ENCODE measurements at regions of chr20 and their contacts with region 1.

Region 1: DNA sequence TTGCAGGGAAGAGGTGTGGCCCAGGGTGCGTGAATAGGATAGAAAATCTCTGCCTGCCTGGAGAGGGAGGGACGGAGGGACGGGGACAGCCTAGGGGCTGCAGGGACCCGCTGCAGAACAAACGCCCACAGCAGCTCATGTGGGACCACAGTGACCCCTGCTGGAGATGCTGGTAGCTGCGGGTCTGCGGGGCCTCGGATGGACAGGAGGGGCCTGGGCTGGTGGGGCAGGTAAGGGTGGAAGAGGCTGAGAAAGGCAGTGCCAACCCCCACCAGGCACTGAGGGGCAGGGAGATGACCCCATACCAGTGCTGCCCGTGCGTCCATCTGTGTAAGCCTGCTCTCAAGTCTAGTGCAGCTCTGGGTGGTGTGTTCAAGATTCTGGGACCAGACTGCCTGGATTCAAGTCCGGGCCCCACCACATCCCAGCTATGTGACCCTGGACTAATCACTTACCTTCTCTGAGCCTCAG is 39.4 kb downstream of the KIAA1755 start:
- DNase-seq: peak; percentile 94
- H3K27ac ChIP-seq: no peak overlapping the region
- CTCF ChIP-seq: peak; percentile 99

Region 2: GRCh38 chr20:38057351-38057972 is 163.7 kb before region 1 on chr20:
- CTCF ChIA-PET with region 1: interaction called, 88 read pairs
- POLR2A ChIA-PET with region 1: no interaction called
- DNase-seq: peak; percentile 92
- H3K27ac ChIP-seq: no peak overlapping the region
- CTCF ChIP-seq: peak; percentile 97

Region 3: DNA sequence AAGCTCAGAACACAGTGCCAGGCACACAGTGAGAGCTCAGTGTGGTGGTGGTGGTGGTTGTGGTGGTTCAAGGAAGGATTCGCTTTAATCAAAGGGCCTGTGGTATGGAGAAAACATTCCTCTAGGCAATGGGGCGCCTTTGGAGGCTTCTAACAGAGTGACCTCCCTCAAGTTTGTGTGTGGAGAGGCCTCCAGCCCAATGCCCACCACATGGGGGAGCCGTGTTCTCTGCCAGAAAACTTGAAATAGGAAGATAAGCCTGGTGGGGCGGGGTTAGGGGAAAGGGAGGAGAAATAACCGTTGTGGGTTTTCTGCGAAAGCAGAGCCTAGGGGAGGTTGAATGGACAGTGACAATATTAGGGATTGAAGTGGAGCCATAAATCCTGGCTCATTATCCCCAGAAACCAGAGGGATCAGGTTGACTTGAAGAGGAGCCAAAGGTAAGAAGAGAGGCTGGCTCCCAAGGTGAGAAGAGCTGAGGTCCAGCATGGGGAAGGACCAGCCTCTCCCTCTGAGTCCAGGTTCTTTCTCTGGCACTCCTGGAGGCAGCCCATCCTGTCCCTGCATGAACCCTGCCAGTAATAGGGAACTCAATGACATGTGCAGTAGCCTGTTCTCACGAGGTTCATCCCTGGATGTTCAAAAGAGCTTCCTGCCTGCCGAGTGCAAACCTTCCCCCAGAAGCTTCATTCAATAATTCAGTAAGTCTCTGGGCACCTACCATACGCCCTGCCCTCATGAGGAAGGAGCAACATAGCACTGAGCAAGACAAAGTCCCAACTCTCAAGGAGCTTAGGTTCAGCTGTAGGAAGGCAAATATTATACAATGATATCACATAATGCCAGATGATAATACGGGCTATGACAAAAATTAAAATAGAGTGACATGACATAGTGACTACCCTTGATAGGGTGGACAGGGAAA is 107.5 kb before region 1 on chr20:
- CTCF ChIA-PET with region 1: interaction called, 31 read pairs
- POLR2A ChIA-PET with region 1: no interaction called
- DNase-seq: peak; percentile 46
- H3K27ac ChIP-seq: no peak overlapping the region
- CTCF ChIP-seq: no peak; the same call in 1 of the 2 replicates

Region 4: GRCh38 chr20:38173237-38174156 is 47.7 kb before region 1 on chr20:
- CTCF ChIA-PET with region 1: interaction called, 47 read pairs
- POLR2A ChIA-PET with region 1: no interaction called
- DNase-seq: peak; percentile 98
- H3K27ac ChIP-seq: peak overlapping the region; percentile 64
- CTCF ChIP-seq: no peak; the same call in 1 of the 2 replicates

Region 5: DNA sequence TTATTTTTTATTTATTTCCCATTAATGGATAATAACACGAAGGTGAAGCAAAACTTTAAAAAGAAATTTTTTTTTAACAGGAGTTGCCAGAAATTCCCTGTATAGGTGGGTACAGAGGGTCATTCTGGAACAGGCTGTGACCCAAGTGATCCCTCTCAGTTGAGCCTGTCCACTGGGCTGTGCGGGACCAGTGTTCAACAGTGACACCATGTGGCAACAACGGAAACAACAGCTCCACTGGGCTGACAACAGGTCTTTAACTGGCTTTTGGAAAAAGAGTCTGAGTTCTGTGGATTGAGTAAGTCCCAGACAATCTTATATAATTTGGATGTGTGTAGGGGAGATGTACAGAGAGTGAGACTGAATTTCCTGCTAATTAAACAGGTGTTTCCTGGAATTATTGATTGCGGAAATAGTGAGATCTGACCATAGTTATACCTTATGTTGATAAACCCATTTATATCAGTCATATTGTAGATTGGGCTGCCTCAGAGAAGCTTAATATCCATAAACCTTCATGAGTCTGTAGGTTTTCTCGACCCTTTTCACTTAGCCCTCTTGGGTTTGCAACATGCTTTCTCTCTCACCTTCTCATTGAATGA is 21.8 kb after region 1 on chr20:
- CTCF ChIA-PET with region 1: interaction called, 10 read pairs
- POLR2A ChIA-PET with region 1: no interaction called
- DNase-seq: no peak
- H3K27ac ChIP-seq: no peak overlapping the region
- CTCF ChIP-seq: peak; percentile 48; the same call in 1 of the 2 replicates

Measured in RWPE1 (cell line).